ENCODE measurements at regions of chr12 and their contacts with region 1.

Region 1: GRCh38 chr12:11730299-11731041 is 81.0 kb downstream of the ETV6 start:
- DNase-seq: peak; percentile 83 to 96
- H3K4me3 ChIP-seq: peak overlapping the region; percentile 8; the same call in 1 of the 2 replicates
- H3K27ac ChIP-seq: peak overlapping the region; percentile 87
- H3K4me1 ChIP-seq: peaks cover 44% of the 10 kb centered on the region
- H3K27me3 ChIP-seq: no peaks in the 10 kb centered on the region
- CTCF ChIP-seq: no peak

Region 2: GRCh38 chr12:11877869-11878780 is 147.7 kb after region 1 on chr12:
- CTCF ChIA-PET with region 1: no interaction called
- POLR2A ChIA-PET with region 1: no interaction called
- intact Hi-C with region 1: loop called (anchors 1 kb)
- DNase-seq: peak; percentile 85 to 93
- H3K4me3 ChIP-seq: peak overlapping the region; percentile 45; the same call in 1 of the 2 replicates
- H3K27ac ChIP-seq: peak overlapping the region; percentile 96
- H3K4me1 ChIP-seq: peaks cover 64% of the 10 kb centered on the region
- H3K27me3 ChIP-seq: no peaks in the 10 kb centered on the region
- CTCF ChIP-seq: no peak

Region 3: DNA sequence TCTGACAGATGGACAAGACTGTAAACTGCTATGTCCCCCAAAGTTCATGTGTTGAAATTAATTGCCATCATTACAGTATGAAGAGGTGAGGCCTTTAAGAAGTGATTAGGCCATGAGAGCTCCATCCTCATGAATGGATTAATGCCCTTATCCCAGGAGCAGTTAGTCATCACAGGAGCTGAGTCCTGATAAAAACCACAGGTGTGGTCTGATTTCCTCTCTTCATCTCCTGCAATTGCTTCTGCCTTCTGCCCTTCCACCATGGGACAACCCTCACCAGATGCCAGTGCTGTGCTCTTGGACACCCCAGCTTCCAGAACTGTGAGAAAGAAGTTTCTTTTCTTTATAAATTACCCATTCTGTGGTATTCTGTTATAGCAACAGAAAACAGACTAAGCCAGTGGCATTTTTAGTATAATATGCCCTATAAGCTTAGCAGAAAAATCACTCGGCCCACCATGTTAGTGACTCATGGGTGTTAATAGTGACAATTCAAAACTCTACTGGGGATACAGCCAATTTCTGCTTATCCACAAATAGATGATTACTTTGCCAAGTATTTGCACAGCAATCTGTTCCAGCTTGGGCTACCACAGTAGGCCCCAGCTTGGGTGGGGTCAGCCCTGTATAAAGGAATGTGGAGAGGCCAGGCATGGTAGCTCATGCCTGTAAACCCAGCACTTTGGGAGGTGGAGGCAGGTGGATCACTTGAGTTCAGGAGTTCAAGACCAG is 211.3 kb after region 1 on chr12:
- CTCF ChIA-PET with region 1: no interaction called
- POLR2A ChIA-PET with region 1: no interaction called
- intact Hi-C with region 1: loop called (anchors 5 kb)
- DNase-seq: peak; percentile 76 to 86
- H3K4me3 ChIP-seq: no peak overlapping the region
- H3K27ac ChIP-seq: peak overlapping the region; percentile 83
- H3K4me1 ChIP-seq: peaks cover 22% of the 10 kb centered on the region
- H3K27me3 ChIP-seq: no peaks in the 10 kb centered on the region
- CTCF ChIP-seq: no peak

Region 4: GRCh38 chr12:12138203-12139154 is 408.0 kb after region 1 on chr12:
- CTCF ChIA-PET with region 1: no interaction called
- POLR2A ChIA-PET with region 1: interaction called, 25 read pairs
- intact Hi-C with region 1: no loop called
- DNase-seq: no peak
- H3K4me3 ChIP-seq: no peak overlapping the region
- H3K27ac ChIP-seq: no peak overlapping the region
- H3K4me1 ChIP-seq: no peaks in the 10 kb centered on the region
- H3K27me3 ChIP-seq: no peaks in the 10 kb centered on the region
- CTCF ChIP-seq: no peak

Region 5: DNA sequence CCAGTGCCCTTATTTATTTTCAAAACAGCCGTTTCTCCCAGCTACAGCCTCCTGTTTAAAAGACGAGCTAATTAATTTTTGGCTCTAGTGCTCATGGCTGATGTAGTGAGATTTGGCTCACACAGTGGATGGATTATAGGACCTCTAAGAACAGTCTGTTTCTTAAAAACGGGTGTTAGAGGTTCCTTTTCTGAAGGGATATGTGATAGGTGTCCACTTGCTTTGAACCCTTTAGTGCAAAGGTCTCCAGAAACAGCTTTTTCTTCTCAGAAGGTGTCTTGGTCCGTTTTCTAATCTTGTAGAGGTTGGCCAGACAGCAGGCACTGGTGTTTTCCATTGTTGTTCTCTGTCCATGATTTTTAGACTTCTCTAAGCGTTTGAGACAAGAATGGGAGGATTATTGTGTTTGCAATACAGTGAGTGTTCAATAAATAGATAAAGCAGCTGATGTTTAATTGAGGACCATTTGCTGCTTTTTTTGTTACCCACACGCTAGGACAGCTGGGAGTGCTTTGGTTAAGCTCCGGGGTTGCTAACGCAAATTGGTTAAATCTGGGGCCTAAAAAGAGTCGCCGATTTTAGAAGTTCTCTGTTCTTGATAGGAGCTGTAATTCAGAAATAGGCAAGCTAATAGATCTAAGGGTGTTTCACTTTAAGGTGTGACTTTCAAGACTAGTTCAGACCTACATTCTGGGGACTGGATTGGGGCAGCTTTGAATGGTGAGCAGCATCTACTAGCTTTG is 627.4 kb after region 1 on chr12:
- CTCF ChIA-PET with region 1: no interaction called
- POLR2A ChIA-PET with region 1: no interaction called
- intact Hi-C with region 1: no loop called
- DNase-seq: no peak
- H3K4me3 ChIP-seq: peak overlapping the region; percentile 70
- H3K27ac ChIP-seq: peak overlapping the region; percentile 73
- H3K4me1 ChIP-seq: peaks cover 16% of the 10 kb centered on the region
- H3K27me3 ChIP-seq: no peaks in the 10 kb centered on the region
- CTCF ChIP-seq: no peak